ENCODE measurements at regions of chr9 and their contacts with region 1.

Region 1: GRCh38 chr9:128081056-128081455 is 13.0 kb downstream of the SLC25A25 start:
- DNase-seq: no peak
- ATAC-seq: no peak
- H3K4me3 Mint-ChIP-seq: no peak overlapping the region
- H3K27ac Mint-ChIP-seq: no peak overlapping the region
- H3K4me1 Mint-ChIP-seq: peaks cover 42% of the 10 kb centered on the region
- H3K27me3 Mint-ChIP-seq: no peaks in the 10 kb centered on the region
- CTCF ChIP-seq: no peak

Region 2: GRCh38 chr9:127943731-127944144 is 137.3 kb before region 1 on chr9:
- CTCF ChIA-PET with region 1: interaction called, 4 read pairs
- POLR2A ChIA-PET with region 1: no interaction called
- intact Hi-C with region 1: loop called (anchors 2 kb)
- DNase-seq: peak; percentile 71
- ATAC-seq: peak; percentile 93
- H3K4me3 Mint-ChIP-seq: no peak overlapping the region
- H3K27ac Mint-ChIP-seq: peak overlapping the region; percentile 73
- H3K4me1 Mint-ChIP-seq: peaks cover 21% of the 10 kb centered on the region
- H3K27me3 Mint-ChIP-seq: no peaks in the 10 kb centered on the region
- CTCF ChIP-seq: no peak

Region 3: DNA sequence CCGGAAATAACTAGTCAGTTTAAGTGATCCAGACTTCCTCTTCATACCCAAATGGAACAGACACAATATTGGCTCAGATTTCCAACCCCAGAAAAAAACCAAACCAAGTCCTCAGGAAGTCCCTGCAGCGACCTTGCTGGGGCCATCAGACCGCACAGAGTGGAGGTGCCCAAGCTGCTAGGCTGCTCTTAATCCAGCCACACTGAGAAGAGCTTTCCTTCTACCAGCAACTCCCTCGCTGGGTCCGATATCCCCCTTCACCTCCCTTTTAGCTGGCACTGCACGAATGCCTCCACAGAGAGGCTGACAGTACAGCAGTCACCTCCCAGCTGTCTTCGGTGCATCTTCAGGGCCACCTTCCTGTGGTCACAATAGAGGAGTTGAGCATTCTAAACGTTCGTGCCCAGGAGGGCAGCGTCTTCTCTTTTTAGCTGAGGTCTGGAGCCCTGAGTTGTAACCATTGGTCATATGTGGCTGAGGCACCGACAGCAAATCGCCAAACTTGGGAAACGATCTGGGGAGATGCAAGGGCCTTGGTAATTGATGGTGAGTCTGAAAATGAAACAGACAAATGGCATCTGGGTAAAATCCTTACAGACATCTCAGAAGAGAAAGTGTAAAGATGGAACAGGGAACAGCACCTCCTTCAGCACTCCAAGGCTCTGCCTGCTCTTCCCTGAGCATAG is 19.6 kb before region 1 on chr9:
- CTCF ChIA-PET with region 1: no interaction called
- POLR2A ChIA-PET with region 1: no interaction called
- intact Hi-C with region 1: no loop called
- DNase-seq: no peak
- ATAC-seq: peak; percentile 19
- H3K4me3 Mint-ChIP-seq: peak overlapping the region; percentile 64
- H3K27ac Mint-ChIP-seq: peak overlapping the region; percentile 82
- H3K4me1 Mint-ChIP-seq: peaks cover 52% of the 10 kb centered on the region
- H3K27me3 Mint-ChIP-seq: no peaks in the 10 kb centered on the region
- CTCF ChIP-seq: no peak

Region 4: DNA sequence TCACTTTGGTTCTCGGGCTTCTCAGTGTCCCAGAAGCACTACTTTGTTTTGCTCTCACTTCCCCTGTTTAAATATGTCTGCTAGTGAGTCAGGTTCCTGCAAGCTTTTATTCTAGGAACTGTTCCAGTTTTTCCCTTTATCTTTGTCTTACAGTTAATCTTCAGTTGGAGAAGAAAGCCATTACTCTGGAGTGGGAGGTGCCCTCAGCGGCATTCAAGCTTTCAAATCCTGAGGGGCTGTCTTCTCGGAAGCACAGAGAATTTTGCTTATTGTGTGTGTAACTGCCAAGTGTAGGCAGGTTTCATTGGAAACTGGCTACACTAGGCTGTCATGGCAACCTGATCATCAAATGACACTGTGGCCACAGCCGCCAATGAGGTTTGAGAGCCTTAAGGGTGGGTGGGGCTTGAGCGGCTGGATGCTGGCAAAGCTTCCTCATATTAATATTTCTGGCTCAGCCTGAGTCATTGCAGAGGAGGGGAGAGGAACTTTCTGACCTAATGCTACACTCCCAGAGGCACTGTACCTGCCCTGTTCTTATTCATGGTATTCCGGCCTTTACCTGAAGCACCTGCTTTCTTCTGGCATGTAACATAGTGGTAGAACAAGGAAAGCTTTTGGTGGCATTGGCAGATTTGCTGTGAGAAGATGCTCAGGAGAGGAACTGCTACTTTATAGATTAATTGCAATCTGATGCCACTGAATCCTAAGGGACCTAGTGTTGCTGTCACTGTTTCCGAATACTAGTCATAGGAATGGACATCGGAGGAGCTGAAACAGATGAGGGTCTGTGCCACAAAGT is 13.3 kb after region 1 on chr9:
- CTCF ChIA-PET with region 1: interaction called, 3 read pairs
- POLR2A ChIA-PET with region 1: interaction called, 6 read pairs
- intact Hi-C with region 1: loop called (anchors 1 kb)
- DNase-seq: peak; percentile 67
- ATAC-seq: peak; percentile 92
- H3K4me3 Mint-ChIP-seq: peak overlapping the region; percentile 71
- H3K27ac Mint-ChIP-seq: peak overlapping the region; percentile 99
- H3K4me1 Mint-ChIP-seq: peaks cover 42% of the 10 kb centered on the region
- H3K27me3 Mint-ChIP-seq: no peaks in the 10 kb centered on the region
- CTCF ChIP-seq: no peak

Region 5: GRCh38 chr9:128117613-128118471 is 36.8 kb after region 1 on chr9:
- CTCF ChIA-PET with region 1: interaction called, 5 read pairs
- POLR2A ChIA-PET with region 1: interaction called, 3 read pairs
- intact Hi-C with region 1: loop called (anchors 1 kb)
- DNase-seq: peak; percentile 98
- ATAC-seq: peak; percentile 48
- H3K4me3 Mint-ChIP-seq: no peak overlapping the region
- H3K27ac Mint-ChIP-seq: peak overlapping the region; percentile 56
- H3K4me1 Mint-ChIP-seq: peaks cover 42% of the 10 kb centered on the region
- H3K27me3 Mint-ChIP-seq: no peaks in the 10 kb centered on the region
- CTCF ChIP-seq: peak; percentile 99

Region 6: DNA sequence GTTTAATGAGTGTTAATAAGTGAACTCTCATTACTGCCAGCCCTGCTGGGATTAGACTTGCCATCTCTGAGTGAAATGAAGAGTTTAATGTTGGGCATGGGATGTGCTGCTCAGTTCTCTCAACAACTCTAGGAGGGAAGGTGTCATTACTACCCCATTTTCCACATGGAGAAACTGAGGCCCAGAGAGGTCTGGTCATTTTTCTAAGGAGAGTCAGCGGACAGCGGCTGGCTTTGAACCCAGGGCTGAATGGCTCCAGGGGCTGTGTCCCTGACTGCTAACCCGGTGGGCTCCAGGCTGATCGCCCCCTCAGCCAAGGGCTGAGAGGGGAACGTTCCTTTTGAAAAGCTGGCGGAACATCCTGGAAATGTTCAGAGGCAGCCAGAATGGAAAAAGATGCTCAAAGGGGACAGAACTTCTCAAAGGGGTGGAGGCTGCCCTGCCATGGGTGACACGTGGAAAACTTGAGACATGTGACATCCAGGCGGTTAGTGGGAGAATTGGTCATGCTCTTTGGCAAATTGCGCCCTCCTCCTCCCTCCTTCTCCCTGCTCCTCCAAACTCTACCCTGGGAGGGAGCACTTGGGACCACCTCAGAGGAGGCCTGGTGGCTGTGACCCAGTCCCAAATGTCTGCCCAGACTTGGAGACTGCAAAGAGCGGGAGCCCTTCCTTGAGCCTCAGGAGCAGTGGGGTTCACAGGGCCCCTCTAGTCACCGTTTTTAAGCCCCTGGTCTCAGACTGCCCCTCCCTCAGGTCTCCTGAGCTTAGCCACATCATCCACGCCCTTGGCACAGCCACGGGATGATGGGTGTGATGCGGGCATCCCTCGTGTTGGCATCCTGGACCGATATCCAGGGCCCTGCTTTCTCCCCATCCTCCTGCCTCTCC is 150.8 kb after region 1 on chr9:
- CTCF ChIA-PET with region 1: no interaction called
- POLR2A ChIA-PET with region 1: no interaction called
- intact Hi-C with region 1: no loop called
- DNase-seq: no peak
- ATAC-seq: no peak
- H3K4me3 Mint-ChIP-seq: no peak overlapping the region
- H3K27ac Mint-ChIP-seq: no peak overlapping the region
- H3K4me1 Mint-ChIP-seq: no peaks in the 10 kb centered on the region
- H3K27me3 Mint-ChIP-seq: no peaks in the 10 kb centered on the region
- CTCF ChIP-seq: no peak

Measured in activated B cell treated with CpG ODN at 0.5 μM for 24 hours (primary cell).